CD4-positive, alpha-beta memory T cell (primary cell): ENCODE measurements at regions of chr6 and their contacts with region 1.

Region 1: DNA sequence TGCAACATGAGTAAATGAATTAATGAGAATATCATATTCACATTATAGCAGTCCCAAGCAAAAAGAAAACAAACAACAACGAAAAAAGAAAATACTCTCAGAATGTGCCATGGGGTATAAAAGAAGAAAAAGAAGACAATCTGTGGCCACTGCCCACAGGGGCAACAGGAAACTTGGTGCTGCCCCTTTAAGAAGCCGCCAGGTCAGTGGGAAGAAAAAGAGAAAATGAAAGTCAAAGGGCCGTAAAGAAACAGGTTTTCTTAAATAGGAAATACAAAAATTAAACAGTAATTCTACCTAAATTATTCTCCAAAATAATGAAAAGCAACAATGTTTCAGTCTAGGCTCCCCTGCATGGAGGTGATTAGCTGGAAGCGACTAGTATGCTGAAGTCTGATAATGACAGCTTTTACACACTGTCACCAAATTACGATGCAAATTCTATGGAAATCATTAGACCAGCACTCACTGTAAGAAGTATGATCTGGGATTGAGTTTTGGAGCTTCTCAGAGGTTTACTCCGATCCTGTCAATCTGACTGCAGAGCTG is 23.6 kb downstream of the GMDS start:
- DNase-seq: no peak
- H3K4me3 ChIP-seq: peak overlapping the region; percentile 13 to 53
- H3K4me3 Mint-ChIP-seq: peak overlapping the region; percentile 80 to 94 (median 93)
- H3K27ac ChIP-seq: peak overlapping the region; percentile 48
- H3K27ac Mint-ChIP-seq: peak overlapping the region in 6 of 7 donors; percentile 12 to 94 (median 83)
- H3K4me1 ChIP-seq: peaks cover 14% of the 10 kb centered on the region
- H3K4me1 Mint-ChIP-seq: peaks cover 12 to 26% (median 20%) of the 10 kb centered on the region in 4 donors
- H3K27me3 ChIP-seq: no peaks in the 10 kb centered on the region
- H3K27me3 Mint-ChIP-seq: no peaks in the 10 kb centered on the region

Region 2: DNA sequence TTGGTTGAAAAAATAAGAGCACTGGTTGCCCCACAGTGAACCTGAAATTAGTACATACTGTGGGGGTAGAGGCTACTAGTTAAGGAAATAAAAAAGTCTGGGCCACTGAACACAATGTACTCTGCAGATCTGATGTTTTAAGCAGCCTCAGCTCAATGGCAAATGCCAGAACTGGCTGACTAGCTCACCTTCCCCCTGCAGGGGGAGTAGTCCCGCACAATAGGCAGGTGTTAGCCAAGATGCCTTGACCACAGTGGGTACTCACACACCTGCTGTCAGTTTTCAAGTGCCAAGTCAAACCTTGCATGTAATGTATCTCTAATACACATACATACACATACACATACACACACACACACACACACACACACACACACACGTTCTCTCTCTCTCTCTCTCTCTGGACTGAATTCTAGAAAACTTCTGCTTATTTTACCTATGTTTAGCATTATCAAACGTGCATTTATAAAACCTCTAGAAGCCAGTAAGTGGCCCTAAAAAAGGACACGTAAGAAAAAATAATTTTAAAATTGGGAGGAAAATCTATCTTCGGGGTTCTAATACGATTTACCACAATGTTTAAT is 12.5 kb before region 1 on chr6:
- CTCF ChIA-PET with region 1: interaction called, 11 read pairs
- POLR2A ChIA-PET with region 1: interaction called, 3 read pairs
- intact Hi-C with region 1: no loop called
- DNase-seq: no peak
- H3K4me3 ChIP-seq: no peak overlapping the region
- H3K4me3 Mint-ChIP-seq: no peak overlapping the region
- H3K27ac ChIP-seq: no peak overlapping the region
- H3K27ac Mint-ChIP-seq: peak overlapping the region in 1 of 7 donors; percentile 21
- H3K4me1 ChIP-seq: no peaks in the 10 kb centered on the region
- H3K4me1 Mint-ChIP-seq: no peaks in the 10 kb centered on the region
- H3K27me3 ChIP-seq: no peaks in the 10 kb centered on the region
- H3K27me3 Mint-ChIP-seq: peaks cover 0 to 3% of the 10 kb centered on the region in 2 donors

Region 3: DNA sequence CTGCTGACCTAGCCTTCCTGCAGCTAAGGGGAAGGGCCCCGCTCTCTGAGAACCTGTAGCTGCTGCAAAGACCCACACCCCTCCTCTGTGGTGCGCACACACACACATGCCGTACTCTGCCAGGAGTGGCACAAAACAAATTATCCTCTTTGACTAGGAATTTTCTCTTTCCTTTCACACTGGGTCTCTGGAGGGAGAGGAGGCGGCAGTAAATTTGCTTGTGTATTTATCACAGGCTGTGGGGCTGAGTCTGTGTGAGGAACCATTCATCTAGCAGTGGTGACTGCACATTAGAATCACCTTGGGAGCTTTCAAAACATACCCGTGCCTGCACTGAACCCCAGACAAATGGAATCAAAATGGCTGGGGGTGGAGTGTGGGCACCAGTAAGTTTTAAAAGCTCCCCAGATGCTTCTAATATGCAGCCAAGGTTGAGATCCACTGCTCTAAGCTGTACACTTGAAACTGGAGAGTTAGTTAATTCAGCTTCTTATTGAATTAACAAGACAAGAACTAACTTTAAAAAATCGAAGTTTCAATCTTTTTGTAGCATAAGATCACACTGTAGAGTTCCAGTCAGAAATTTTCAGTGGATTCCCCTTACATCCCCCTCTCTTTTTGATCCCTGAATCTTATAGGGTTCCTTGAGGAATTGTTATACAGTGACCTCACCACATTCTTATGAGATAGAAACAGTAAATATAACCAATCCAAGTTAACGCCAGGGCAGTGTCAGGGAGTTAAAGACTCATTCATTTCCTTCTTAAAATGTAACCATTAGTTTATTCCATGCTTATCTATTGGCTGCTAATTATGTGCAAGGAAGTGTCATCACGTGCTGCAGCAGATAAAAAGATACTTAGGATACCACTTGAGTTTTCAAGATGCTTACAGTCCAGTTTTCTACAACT is 53.4 kb after region 1 on chr6:
- CTCF ChIA-PET with region 1: no interaction called
- POLR2A ChIA-PET with region 1: no interaction called
- intact Hi-C with region 1: no loop called
- DNase-seq: no peak
- H3K4me3 ChIP-seq: no peak overlapping the region
- H3K4me3 Mint-ChIP-seq: no peak overlapping the region
- H3K27ac ChIP-seq: no peak overlapping the region
- H3K27ac Mint-ChIP-seq: no peak overlapping the region
- H3K4me1 ChIP-seq: no peaks in the 10 kb centered on the region
- H3K4me1 Mint-ChIP-seq: peaks cover 0 to 2% (median 0%) of the 10 kb centered on the region in 4 donors
- H3K27me3 ChIP-seq: no peaks in the 10 kb centered on the region
- H3K27me3 Mint-ChIP-seq: no peaks in the 10 kb centered on the region